Heart right ventricle (tissue), 16 donors: ENCODE measurements at regions of chr10 and their contacts with region 1.

Region 1: GRCh38 chr10:130136226-130137089 is at the start of gene GLRX3:
- DNase-seq: peak; percentile 89 to 91
- ATAC-seq: peak; percentile 96 to 98 (median 98)
- H3K4me3 ChIP-seq: peak within 1 kb of the TSS; percentile 68 to 100 (median 95)
- H3K27ac ChIP-seq: peak within 1 kb of the TSS; percentile 72 to 96 (median 92)
- H3K4me1 ChIP-seq: peaks cover 11 to 54% (median 47%) of the 10 kb centered on the region in 9 donors
- H3K27me3 ChIP-seq: no peaks in the 10 kb centered on the region
- CTCF ChIP-seq: no peak
- total RNA-seq, gene GLRX3: 53.5 to 82.9 (median 65.5) TPM

Region 2: DNA sequence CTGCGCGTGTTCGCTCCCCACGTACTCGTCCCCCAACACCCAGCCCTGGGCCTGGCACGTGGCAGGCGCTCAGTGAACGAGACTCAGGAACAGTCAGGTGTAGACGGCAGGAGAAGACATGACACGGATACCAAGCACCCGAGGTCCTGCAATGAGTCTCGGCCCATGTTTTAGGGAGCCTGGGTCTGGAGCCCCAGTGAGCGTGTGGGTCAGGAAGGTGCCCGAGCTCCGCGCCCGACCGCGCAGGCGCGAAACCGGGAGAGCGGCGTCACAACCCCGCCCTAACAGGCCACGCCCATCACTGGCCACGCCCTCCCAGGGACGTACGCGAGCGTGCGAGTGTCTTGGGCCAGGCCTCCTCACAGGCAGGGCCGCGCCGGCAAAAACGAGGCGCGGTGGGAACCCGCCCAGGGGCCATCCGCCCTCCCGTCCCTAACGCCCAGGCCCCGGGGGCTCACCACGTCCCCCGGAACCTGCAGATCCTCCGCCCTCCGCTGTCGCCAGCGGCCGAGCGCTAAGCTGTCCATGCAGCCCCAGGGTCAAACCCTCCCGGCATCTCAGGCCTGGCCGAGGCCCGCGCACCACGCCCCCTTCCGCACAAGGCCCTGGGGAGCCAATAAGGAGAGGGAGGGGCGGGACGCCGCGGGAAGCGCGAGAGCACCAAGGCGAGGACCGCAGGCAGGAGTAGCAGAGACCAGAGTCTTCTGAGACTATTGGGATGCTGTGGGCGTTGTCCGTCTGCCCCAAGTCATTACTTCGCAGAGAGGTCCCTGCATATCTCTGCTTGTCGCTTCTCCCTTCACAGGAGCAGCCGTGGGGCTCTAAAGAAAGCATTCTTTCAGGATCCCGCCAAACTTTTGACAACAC is 26.0 kb before region 1 on chr10 and contains the start of gene C10orf143:
- intact Hi-C with region 1: loop called in 6 of 10 experiments (anchors 1 to 2 kb)
- DNase-seq: peak; percentile 98 to 99
- ATAC-seq: peak; percentile 95 to 99 (median 96)
- H3K4me3 ChIP-seq: peak within 1 kb of the TSS; percentile 71 to 93 (median 78)
- H3K27ac ChIP-seq: peak within 1 kb of the TSS; percentile 84 to 98 (median 92)
- H3K4me1 ChIP-seq: peaks cover 0 to 37% (median 25%) of the 10 kb centered on the region in 9 donors
- H3K27me3 ChIP-seq: no peaks in the 10 kb centered on the region
- CTCF ChIP-seq: peak in 1 of 9 donors; percentile 11
- total RNA-seq, gene C10orf143: 1.1 to 2.9 (median 2.1) TPM

Region 3: DNA sequence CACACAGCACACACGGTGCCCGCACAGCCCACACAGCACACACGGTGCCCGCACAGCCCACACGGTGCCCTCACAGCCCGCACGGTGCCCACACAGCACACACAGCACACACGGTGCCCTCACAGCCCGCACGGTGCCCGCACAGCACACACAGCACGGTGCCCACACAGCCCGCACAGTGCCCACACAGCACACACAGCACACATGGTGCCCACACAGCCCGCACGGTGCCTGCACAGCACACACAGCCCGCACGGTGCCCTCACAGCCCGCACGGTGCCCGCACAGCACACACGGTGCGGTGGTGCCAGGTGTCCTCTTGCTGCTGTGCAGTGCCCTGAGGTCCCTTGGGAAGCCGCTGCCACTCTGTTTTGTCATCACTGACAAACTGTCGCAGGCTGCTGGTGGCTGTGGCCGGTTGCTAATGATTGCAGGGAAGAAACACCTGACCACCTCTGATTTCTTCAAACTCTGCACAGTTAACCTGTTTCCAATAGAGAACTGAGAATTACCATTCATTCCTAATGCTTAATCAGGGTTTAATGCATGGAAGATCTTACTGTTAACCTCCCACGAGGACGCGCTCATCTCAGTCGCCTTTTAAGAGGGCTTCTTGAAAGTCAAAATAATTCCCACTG is 66.6 kb after region 1 on chr10:
- intact Hi-C with region 1: no loop called
- DNase-seq: no peak
- ATAC-seq: peak in 3 of 8 donors; percentile 11 to 50 (median 23)
- H3K4me3 ChIP-seq: no peak overlapping the region
- H3K27ac ChIP-seq: no peak overlapping the region
- H3K4me1 ChIP-seq: no peaks in the 10 kb centered on the region
- H3K27me3 ChIP-seq: no peaks in the 10 kb centered on the region
- CTCF ChIP-seq: no peak